K562 (cell line): ENCODE measurements at regions of chr18 and their contacts with region 1.

Region 1: GRCh38 chr18:35875566-35875965 is 96.9 kb upstream of the RMP24 start:
- DNase-seq: no peak
- ATAC-seq: no peak
- H3K4me3 ChIP-seq: no peak overlapping the region
- H3K27ac ChIP-seq: no peak overlapping the region
- H3K4me1 ChIP-seq: no peaks in the 10 kb centered on the region
- H3K27me3 ChIP-seq: no peaks in the 10 kb centered on the region
- CTCF ChIP-seq: no peak
- EP300 ChIP-seq: no peak
- POLR2A ChIP-seq: no peak
- RAD21 ChIP-seq: no peak

Region 2: DNA sequence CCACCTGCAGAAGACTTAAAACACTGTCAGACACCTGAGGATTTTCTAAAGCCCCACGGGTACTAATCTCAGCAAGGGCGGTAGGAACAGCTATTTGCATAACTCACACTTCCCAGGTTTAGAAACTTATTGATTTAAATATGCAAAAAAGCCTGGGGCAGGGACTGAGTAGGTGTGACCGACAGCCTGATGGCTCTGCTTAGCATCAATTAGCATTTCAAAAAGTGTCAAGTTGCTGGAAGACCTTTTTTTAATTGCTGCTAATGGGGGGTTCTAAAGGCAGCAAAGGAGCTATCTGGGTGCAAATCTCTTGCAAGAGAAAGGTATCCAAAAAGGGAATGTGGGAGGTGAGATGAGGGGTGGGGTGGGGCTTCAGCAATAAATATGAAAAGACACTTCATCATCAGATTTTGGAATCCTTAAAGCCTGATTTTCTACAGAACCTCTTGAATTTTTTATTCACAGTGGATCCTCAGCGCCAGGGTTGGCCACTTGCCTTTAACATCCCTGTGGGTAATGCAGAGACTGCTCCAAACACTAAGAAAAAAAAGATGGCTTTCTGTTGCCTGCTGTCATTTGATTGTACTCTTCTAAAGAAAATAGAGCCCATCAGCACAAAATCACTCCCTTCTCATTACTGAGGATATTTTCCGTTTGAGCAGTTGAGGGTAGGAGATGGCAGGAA is 24.1 kb before region 1 on chr18:
- CTCF ChIA-PET with region 1: no interaction called
- POLR2A ChIA-PET with region 1: no interaction called
- in situ Hi-C with region 1: no loop called
- intact Hi-C with region 1: no loop called
- DNase-seq: no peak
- ATAC-seq: no peak
- H3K4me3 ChIP-seq: no peak overlapping the region
- H3K27ac ChIP-seq: no peak overlapping the region
- H3K4me1 ChIP-seq: no peaks in the 10 kb centered on the region
- H3K27me3 ChIP-seq: peaks cover 4 to 10% of the 10 kb centered on the region in 2 experiments; a peak in 3 of 5 replicates
- CTCF ChIP-seq: no peak
- EP300 ChIP-seq: no peak
- POLR2A ChIP-seq: no peak
- RAD21 ChIP-seq: no peak

Region 3: GRCh38 chr18:36086186-36086585 is 210.6 kb after region 1 on chr18:
- CTCF ChIA-PET with region 1: no interaction called
- POLR2A ChIA-PET with region 1: no interaction called
- in situ Hi-C with region 1: no loop called
- intact Hi-C with region 1: no loop called
- DNase-seq: no peak
- ATAC-seq: peak; percentile 11; the same call in 1 of the 3 replicates
- H3K4me3 ChIP-seq: no peak overlapping the region
- H3K27ac ChIP-seq: no peak overlapping the region
- H3K4me1 ChIP-seq: peaks cover 0 to 8% of the 10 kb centered on the region in 2 experiments; a peak in 1 of 5 replicates
- H3K27me3 ChIP-seq: peaks cover 12 to 18% of the 10 kb centered on the region in 2 experiments
- CTCF ChIP-seq: no peak
- EP300 ChIP-seq: no peak
- POLR2A ChIP-seq: no peak
- RAD21 ChIP-seq: no peak

Region 4: GRCh38 chr18:37006742-37007141 is 1131.2 kb after region 1 on chr18:
- CTCF ChIA-PET with region 1: no interaction called
- POLR2A ChIA-PET with region 1: no interaction called
- in situ Hi-C with region 1: no loop called
- intact Hi-C with region 1: loop called (anchors 10 kb)
- DNase-seq: no peak
- ATAC-seq: no peak
- H3K4me3 ChIP-seq: no peak overlapping the region
- H3K27ac ChIP-seq: no peak overlapping the region
- H3K4me1 ChIP-seq: no peaks in the 10 kb centered on the region
- H3K27me3 ChIP-seq: no peaks in the 10 kb centered on the region
- CTCF ChIP-seq: no peak
- EP300 ChIP-seq: no peak
- POLR2A ChIP-seq: no peak
- RAD21 ChIP-seq: no peak